OCI-LY7 (cell line): ENCODE measurements at regions of chr22 and their contacts with region 1.

Region 1: GRCh38 chr22:35749808-35750207 is 32.1 kb downstream of the APOL5 start:
- DNase-seq: peak; percentile 98
- H3K4me3 ChIP-seq: peak overlapping the region; percentile 46
- H3K27ac ChIP-seq: peak overlapping the region; percentile 99
- H3K4me1 ChIP-seq: peaks cover 100% of the 10 kb centered on the region
- CTCF ChIP-seq: no peak

Region 2: DNA sequence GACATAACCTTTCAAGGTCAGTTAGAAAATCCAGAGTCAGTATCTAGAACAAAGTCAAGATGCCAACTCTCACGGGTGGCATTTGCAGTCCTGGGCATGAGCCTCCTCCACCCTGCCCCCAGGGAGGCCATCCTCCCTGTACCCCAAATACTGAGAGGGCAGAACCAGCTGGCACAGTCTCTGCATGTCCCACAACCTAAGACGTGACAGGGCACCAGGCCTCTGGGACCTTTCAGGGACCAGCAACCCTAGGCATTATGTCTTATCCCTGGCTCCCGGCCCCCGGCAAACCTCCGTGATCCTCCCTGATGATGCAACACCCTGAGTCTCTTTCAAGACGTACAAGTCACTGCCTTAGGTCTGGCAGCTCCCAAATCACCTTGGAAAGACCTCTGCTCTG is 134.7 kb before region 1 on chr22:
- CTCF ChIA-PET with region 1: no interaction called
- POLR2A ChIA-PET with region 1: no interaction called
- intact Hi-C with region 1: no loop called
- DNase-seq: no peak
- H3K4me3 ChIP-seq: no peak overlapping the region
- H3K27ac ChIP-seq: no peak overlapping the region
- H3K4me1 ChIP-seq: peaks cover 17% of the 10 kb centered on the region
- CTCF ChIP-seq: no peak

Region 3: GRCh38 chr22:35627264-35628041 is 122.4 kb before region 1 on chr22:
- CTCF ChIA-PET with region 1: interaction called, 3 read pairs
- POLR2A ChIA-PET with region 1: interaction called, 3 read pairs
- intact Hi-C with region 1: loop called (anchors 5 kb)
- DNase-seq: peak; percentile 83
- H3K4me3 ChIP-seq: peak overlapping the region; percentile 64
- H3K27ac ChIP-seq: peak overlapping the region; percentile 18
- H3K4me1 ChIP-seq: peaks cover 25% of the 10 kb centered on the region
- CTCF ChIP-seq: peak; percentile 83

Region 4: GRCh38 chr22:35728639-35729308 is 21.0 kb before region 1 on chr22:
- CTCF ChIA-PET with region 1: interaction called, 3 read pairs
- POLR2A ChIA-PET with region 1: interaction called, 6 read pairs
- intact Hi-C with region 1: loop called (anchors 1 kb)
- DNase-seq: peak; percentile 91
- H3K4me3 ChIP-seq: peak overlapping the region; percentile 67
- H3K27ac ChIP-seq: peak overlapping the region; percentile 91
- H3K4me1 ChIP-seq: peaks cover 68% of the 10 kb centered on the region
- CTCF ChIP-seq: peak; percentile 42

Region 5: DNA sequence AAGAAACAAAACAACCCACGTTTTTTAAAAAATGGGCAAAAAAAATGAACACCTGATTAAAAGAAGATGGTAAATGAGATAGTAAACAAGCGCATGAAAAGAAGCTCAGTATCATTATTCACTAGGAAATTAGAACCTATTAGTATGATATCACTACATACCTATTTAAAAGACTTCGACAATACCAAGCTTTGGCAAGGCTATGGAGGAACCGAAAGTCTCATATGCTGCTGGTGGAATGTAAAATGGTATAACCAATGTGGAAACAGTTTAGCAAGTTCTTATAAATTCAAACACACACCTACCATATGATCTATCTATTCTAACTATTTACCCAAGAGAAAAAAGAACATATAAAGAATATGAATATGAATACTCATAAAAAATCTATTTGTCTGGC is 111.6 kb after region 1 on chr22:
- CTCF ChIA-PET with region 1: no interaction called
- POLR2A ChIA-PET with region 1: interaction called, 6 read pairs
- intact Hi-C with region 1: loop called (anchors 1 kb)
- DNase-seq: peak; percentile 84
- H3K4me3 ChIP-seq: peak overlapping the region; percentile 47
- H3K27ac ChIP-seq: peak overlapping the region; percentile 99
- H3K4me1 ChIP-seq: peaks cover 100% of the 10 kb centered on the region
- CTCF ChIP-seq: no peak

Region 6: DNA sequence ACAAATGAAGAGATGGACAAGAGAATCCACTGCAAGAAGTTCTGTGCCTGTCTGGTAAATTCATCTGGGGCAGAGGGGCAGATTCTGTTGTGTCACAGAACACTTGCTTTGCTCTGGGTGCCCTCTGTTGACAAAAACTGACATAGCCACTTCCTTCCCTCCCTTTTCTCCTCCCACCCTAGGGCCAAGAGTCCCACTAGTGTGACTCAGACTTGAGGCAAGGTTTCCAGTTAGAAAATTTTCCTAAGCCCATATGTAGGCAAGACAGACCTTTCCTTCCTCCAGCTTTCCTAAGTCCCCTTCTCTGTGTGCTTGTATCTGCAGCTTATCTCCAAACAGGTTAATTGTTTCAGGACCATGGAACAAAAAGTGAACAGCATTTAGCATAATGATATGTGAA is 172.0 kb after region 1 on chr22:
- CTCF ChIA-PET with region 1: no interaction called
- POLR2A ChIA-PET with region 1: interaction called, 6 read pairs
- intact Hi-C with region 1: loop called (anchors 1 kb)
- DNase-seq: peak; percentile 86
- H3K4me3 ChIP-seq: no peak overlapping the region
- H3K27ac ChIP-seq: peak overlapping the region; percentile 29
- H3K4me1 ChIP-seq: peaks cover 61% of the 10 kb centered on the region
- CTCF ChIP-seq: peak; percentile 96